ENCODE measurements at regions of chr7 and their contacts with region 1.

Region 1: DNA sequence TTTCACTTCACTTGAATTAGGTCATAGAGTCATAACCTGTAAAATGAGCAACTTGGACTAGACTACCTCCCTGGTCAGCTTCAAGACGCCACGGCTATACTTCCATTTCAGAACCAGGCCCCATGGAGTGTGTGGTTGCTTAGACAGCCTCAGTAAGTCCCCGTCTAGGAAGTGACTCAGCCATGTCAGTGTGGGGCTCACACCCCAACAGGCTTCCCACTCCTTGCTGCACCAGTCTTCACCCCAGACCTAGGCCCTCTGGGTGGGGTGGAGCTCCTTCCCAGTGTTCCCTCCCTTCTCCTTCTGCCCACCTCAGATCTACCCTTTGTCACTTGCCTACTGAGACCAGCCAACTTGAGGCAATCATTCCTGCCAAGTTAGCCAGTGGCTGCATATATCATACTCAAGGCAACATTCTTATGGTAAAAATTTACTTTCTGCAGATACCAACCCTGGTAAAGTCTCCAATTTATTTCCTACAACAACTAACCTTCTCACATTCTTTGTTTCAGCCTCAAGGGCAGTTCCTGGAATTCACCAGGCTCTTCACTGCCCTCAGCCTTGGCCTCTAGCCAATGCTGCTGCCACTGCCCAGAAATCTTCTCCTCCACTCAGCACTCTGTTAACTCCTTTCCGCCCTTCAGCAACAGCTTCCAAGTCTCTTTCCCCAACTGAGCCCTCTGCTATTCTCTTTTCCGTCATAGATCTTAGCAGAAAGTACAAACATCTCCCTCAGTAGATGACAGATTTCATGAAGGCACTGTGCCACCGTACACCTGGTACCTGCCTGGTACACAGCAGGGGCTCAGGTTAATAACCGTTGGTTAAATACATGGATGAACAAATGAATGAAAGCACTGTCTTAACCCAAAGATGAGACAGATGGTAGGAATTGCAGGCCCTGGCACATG is 31.3 kb upstream of the ZNRF2 start:
- DNase-seq: peak; percentile 73
- H3K4me3 Mint-ChIP-seq: peak overlapping the region; percentile 3
- H3K27ac Mint-ChIP-seq: peak overlapping the region; percentile 9
- H3K4me1 Mint-ChIP-seq: peaks cover 51% of the 10 kb centered on the region
- H3K27me3 Mint-ChIP-seq: peaks cover 8% of the 10 kb centered on the region
- CTCF ChIP-seq: no peak

Region 2: DNA sequence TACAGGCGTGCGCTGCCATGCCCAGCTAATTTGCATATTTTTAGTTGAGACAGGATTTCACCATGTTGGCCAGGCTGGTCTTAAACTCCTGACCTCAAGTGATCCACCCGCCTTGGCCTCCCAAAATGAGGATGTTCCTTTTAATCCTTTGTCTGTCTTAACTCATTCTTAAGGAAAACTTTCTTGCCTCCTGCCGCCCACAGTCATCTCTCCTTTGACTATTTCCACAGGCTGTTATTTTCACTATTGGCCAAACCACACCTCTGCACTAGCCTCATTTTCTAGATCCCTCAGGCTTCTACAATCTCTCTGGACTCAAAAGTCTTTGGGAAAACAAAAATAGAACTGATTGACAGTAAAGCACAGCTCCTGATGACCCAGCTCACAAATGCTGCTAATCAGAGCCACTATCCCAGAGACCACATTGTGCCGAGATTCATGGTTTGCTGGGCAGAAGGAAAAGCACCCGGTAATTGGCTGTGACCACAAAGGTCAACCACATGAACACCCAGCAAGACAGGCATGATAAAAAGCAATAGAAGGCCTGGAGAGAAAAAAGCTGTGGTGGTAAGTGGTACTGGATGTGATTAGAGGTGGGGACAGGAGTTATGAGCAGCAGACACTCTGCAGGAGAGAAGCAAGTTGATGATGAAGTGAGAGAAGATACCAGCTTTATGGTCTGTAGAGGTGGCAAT is 12.9 kb before region 1 on chr7:
- CTCF ChIA-PET with region 1: interaction called, 12 read pairs
- intact Hi-C with region 1: no loop called
- DNase-seq: no peak
- H3K4me3 Mint-ChIP-seq: no peak overlapping the region
- H3K27ac Mint-ChIP-seq: no peak overlapping the region
- H3K4me1 Mint-ChIP-seq: peaks cover 26% of the 10 kb centered on the region
- H3K27me3 Mint-ChIP-seq: peaks cover 16% of the 10 kb centered on the region
- CTCF ChIP-seq: no peak

Region 3: DNA sequence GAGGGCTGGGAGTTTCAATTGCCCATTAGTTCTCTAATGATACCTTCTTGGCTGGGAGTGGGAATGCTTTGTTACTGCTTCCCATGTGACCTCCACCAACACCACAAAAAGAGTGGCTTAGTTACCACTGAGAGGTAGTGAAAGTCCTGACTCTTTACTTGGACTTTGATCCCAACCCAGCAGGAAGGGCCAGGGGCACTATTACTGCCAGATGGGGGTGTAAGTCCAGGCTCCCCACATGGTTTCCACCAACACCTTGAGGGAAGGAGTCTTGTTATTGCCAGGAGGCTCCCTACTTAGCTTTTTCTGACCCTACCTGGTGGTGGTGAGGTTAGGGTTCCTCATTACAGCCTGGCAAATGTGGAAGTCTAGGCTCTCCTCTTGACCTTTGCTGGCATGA is 240.1 kb after region 1 on chr7:
- CTCF ChIA-PET with region 1: no interaction called
- intact Hi-C with region 1: no loop called
- DNase-seq: no peak
- H3K4me3 Mint-ChIP-seq: no peak overlapping the region
- H3K27ac Mint-ChIP-seq: no peak overlapping the region
- H3K4me1 Mint-ChIP-seq: peaks cover 7% of the 10 kb centered on the region
- H3K27me3 Mint-ChIP-seq: no peaks in the 10 kb centered on the region
- CTCF ChIP-seq: no peak

Region 4: DNA sequence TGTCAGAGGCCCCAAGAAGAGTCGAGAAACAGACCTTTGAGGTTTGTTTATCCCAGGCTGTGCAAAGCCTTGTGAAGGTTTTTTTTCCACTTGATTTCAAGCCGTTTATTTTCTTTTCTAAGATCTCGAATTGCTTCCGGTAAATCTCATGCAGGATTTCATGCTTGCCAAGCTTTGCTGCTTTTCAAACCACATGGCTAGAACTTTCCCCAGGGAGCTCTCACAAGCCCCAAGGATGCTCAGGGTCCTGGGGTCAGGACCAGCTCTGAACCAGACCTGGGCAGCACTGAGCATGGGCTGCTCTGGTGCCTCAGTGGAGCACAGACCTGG is 610.5 kb after region 1 on chr7:
- CTCF ChIA-PET with region 1: no interaction called
- intact Hi-C with region 1: no loop called
- DNase-seq: no peak
- H3K4me3 Mint-ChIP-seq: no peak overlapping the region
- H3K27ac Mint-ChIP-seq: no peak overlapping the region
- H3K4me1 Mint-ChIP-seq: no peaks in the 10 kb centered on the region
- H3K27me3 Mint-ChIP-seq: no peaks in the 10 kb centered on the region
- CTCF ChIP-seq: no peak

Measured in Calu3 (cell line).